ENCODE measurements at regions of chr10 and their contacts with region 1.

Region 1: GRCh38 chr10:100009793-100010676 is at the start of gene DNMBP:
- DNase-seq: peak; percentile 77
- H3K4me3 Mint-ChIP-seq: peak within 1 kb of the TSS; percentile 91
- H3K27ac Mint-ChIP-seq: peak within 1 kb of the TSS; percentile 83
- H3K4me1 Mint-ChIP-seq: peaks cover 45% of the 10 kb centered on the region
- H3K27me3 Mint-ChIP-seq: peaks cover 23% of the 10 kb centered on the region
- total RNA-seq, gene DNMBP: 1.4 and 1.5 TPM in 2 replicates

Region 2: DNA sequence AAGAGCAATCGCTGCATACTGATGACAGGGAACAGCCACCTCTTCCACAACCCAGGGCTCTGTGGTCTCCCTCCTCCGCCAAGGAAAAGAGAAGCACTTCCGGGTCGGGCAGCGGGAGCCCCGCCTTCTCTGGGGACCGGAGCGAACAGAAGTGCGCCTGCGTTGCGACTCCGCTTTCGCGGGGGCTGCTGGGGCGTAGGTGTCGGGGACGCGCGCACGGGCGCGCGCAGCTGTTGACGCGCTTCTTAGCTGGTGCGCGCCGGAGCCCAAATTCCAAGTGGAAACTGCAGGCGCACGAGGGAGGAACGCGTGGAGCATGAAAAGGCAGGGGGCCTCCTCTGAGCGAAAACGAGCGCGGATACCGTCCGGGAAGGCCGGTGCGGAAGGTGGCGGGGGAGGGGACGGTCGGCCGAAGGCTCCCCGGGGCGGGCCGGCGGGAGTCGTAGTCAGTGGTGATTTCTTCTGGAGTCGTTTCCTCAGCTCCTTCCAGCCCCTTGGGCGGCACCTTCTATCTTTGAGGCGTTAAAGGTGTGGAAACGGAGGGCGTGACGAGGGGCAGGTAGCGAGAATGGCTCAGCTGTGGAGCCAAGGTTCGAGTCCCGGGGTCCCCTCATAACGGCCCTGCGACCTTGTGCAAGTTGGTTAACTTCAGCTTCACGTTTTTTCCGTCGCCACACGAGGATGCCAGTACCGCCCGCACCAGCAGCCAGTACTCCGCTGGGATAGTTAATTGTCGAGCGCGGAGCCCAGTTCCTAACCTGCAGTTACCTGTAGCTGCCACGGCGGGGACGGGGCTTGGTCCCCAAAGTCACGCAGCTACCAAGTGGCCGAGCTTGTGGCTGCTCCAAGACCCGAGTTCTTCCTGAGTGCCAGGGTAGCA is 277.8 kb before region 1 on chr10 and contains the starts of genes COX15 and CUTC:
- intact Hi-C with region 1: loop called (anchors 5 kb)
- DNase-seq: peak; percentile 94
- H3K4me3 Mint-ChIP-seq: peak within 1 kb of the TSS; percentile 98
- H3K27ac Mint-ChIP-seq: peak within 1 kb of the TSS; percentile 99
- H3K4me1 Mint-ChIP-seq: peaks cover 41% of the 10 kb centered on the region
- H3K27me3 Mint-ChIP-seq: no peaks in the 10 kb centered on the region
- total RNA-seq, gene COX15: 36.7 and 38.1 TPM in 2 replicates
- total RNA-seq, gene CUTC: 42.2 and 45.4 TPM in 2 replicates

Region 3: GRCh38 chr10:99870123-99870730 is 139.8 kb before region 1 on chr10:
- intact Hi-C with region 1: loop called (anchors 1 kb)
- DNase-seq: peak; percentile 8
- H3K4me3 Mint-ChIP-seq: peak overlapping the region; percentile 25
- H3K27ac Mint-ChIP-seq: peak overlapping the region; percentile 18
- H3K4me1 Mint-ChIP-seq: peaks cover 6% of the 10 kb centered on the region
- H3K27me3 Mint-ChIP-seq: peaks cover 56% of the 10 kb centered on the region

Region 4: DNA sequence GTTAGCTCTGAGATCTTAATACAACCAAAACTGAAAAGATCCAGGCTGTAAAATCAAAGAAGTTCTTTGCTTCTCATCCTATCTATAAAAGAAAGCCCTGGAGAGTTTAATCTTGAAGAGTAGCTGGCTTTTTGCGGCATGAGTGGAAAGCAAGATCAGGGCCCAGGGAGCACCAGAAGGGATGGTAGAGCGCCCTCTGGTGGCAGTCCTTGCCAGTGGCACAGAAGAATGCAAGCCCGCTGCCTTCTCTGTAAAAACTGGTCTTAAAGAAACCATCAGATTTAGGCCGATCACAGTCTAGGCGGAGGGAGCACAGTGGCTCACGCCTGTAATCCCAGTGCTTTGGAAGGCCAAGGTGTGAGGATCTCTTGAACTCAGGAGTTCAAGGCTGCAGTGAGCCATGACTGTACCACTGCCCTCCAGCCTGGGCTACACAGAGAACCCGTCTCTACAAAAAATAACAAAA is 36.0 kb after region 1 on chr10:
- intact Hi-C with region 1: loop called (anchors 2 kb)
- DNase-seq: peak; percentile 57
- H3K4me3 Mint-ChIP-seq: no peak overlapping the region
- H3K27ac Mint-ChIP-seq: no peak overlapping the region
- H3K4me1 Mint-ChIP-seq: no peaks in the 10 kb centered on the region
- H3K27me3 Mint-ChIP-seq: peaks cover 12% of the 10 kb centered on the region

Measured in activated T-helper 1 cell treated with anti-CD3 and anti-CD28 coated beads, Interleukin-12 subunit alpha, Interleukin-12 subunit beta, Interleukin-2, Interleukin-4 antibody, amounts not matched to agents 30 ng/mL and 10 ng/mL and 1 ng/mL, durations not matched to agents 14 hours and 24 hours and 36 hours (primary cell).